ENCODE measurements at regions of chr9 and their contacts with region 1.

Region 1: DNA sequence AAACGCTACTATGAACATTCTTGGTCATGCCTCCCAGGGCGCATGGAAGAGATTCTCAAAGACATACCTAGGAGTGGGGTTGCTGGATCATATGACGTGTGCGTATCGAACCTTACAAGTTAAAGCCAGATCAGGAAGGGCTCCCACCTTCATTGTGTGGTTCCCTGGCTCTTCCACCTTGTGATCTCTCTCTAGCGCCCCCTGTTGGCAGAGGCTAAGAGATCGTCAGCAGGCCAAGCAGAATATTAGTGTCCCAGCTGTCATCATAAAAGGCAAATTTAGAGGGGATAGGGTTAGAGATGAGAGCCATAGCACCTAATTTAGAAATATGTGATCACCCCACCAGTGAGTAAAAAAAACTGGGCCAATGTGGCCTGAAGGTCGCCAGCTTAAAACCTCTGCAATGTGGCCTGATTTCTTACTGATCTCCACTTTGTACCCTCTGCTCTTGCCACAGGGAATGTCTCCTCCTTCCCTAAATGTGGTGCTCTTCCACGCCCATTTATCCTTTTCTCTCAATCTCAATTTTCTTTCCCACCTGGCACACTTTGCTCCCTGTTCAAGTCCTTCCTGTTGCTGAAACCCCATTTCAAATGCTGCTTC is 91.7 kb upstream of the SHB start:
- DNase-seq: no peak
- H3K4me3 ChIP-seq: no peak overlapping the region
- H3K27me3 ChIP-seq: peaks cover 7% of the 10 kb centered on the region
- CTCF ChIP-seq: peak; percentile 92

Region 2: DNA sequence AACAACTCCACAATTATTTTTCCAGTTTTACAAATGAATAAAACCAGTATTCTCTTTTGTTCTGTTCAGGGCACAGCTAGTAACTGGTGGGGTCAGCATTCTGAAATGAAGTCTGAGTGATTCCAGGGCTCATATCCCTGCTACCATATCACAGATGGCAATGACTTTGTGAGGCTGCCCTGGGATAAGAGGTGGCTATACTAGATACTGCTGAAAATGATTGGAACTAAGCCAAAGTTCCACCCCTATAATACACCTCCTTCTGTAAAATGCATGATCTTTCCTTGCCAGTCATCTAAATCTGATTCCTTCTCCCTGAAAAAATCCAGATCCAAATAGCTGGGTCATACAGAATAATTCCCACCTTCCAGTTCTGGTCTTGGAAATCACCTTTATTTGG is 271.2 kb before region 1 on chr9:
- CTCF ChIA-PET with region 1: no interaction called
- POLR2A ChIA-PET with region 1: no interaction called
- DNase-seq: no peak
- H3K4me3 ChIP-seq: no peak overlapping the region
- H3K27me3 ChIP-seq: no peaks in the 10 kb centered on the region
- CTCF ChIP-seq: no peak

Region 3: DNA sequence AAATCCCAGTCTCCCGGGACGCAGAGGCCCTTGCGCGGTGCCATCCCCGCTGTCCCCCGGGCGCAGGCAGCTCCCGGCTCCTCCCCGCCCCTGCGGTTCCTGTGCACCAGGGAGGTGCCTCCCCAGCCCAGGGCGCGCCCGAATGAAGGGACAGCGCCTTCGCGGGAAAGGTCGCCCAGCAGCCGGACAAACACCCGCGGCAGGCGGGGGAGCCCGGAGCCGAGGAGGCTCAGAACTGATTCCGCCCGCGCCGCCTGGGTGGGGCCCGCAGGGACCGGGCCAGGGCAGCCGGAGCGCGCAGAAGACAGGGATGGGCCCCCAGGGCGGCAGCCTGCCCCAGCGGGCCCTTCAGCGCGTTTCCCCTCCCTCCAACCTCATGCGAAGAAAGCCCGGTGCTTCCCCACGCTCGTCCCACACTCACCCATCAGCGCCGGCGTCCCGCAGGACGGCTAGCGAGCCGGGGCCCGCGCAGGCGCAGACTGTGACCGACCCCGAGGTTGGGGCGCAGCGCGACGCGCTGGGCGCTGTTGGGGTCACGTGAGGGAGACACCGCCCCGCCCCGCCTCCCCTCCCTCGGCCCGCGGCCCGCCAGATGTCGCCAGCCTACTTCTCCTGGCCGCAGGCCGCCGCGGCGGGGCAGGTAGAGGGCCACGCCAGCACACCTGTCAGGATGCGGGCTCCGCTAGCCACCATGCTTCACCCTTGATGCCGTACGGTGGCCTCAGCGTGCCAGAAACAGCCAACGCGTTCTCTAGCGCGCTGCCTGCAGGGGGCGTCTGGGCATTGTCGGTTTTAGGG is 256.9 kb before region 1 on chr9 and contains the start of gene SLC25A51:
- CTCF ChIA-PET with region 1: interaction called, 15 read pairs
- POLR2A ChIA-PET with region 1: no interaction called
- DNase-seq: peak; percentile 44
- H3K4me3 ChIP-seq: peak within 1 kb of the TSS; percentile 84
- H3K27me3 ChIP-seq: no peaks in the 10 kb centered on the region
- CTCF ChIP-seq: peak; percentile 98
- polyA plus RNA-seq, gene SLC25A51: 15.6 and 24.4 TPM in 2 replicates

Region 4: GRCh38 chr9:38141746-38142591 is 18.7 kb before region 1 on chr9:
- CTCF ChIA-PET with region 1: interaction called, 16 read pairs
- POLR2A ChIA-PET with region 1: no interaction called
- DNase-seq: peak; percentile 50
- H3K4me3 ChIP-seq: no peak overlapping the region
- H3K27me3 ChIP-seq: peaks cover 8% of the 10 kb centered on the region
- CTCF ChIP-seq: no peak

Region 5: DNA sequence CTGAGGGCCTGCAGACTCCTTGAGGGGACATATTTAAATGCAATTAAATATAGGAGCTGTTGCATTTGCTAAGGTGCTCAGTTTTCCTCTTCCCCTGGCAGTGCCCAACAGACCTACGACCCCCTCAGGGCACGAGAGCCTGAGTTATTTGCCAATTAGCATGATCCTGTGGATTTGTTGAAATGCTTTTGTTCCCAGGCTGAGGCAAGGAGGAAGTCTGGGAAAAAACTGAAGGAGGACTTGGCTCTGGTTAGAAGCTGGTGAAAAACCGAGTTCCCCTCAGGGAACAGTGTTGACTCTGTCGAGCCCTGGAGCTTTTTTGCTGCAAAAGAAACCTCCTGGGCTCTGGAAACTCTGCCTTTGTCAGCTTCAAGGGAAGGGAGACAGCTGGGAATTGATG is 11.9 kb after region 1 on chr9:
- CTCF ChIA-PET with region 1: interaction called, 24 read pairs
- POLR2A ChIA-PET with region 1: no interaction called
- DNase-seq: no peak
- H3K4me3 ChIP-seq: no peak overlapping the region
- H3K27me3 ChIP-seq: no peaks in the 10 kb centered on the region
- CTCF ChIP-seq: no peak

Region 6: GRCh38 chr9:38294220-38294960 is 133.7 kb after region 1 on chr9:
- CTCF ChIA-PET with region 1: no interaction called
- POLR2A ChIA-PET with region 1: no interaction called
- DNase-seq: no peak
- H3K4me3 ChIP-seq: no peak overlapping the region
- H3K27me3 ChIP-seq: peaks cover 6% of the 10 kb centered on the region
- CTCF ChIP-seq: no peak

Region 7: GRCh38 chr9:38414040-38414723 is 253.5 kb after region 1 on chr9:
- CTCF ChIA-PET with region 1: no interaction called
- POLR2A ChIA-PET with region 1: no interaction called
- DNase-seq: no peak
- H3K4me3 ChIP-seq: no peak overlapping the region
- H3K27me3 ChIP-seq: peaks cover 14% of the 10 kb centered on the region
- CTCF ChIP-seq: no peak

Region 8: DNA sequence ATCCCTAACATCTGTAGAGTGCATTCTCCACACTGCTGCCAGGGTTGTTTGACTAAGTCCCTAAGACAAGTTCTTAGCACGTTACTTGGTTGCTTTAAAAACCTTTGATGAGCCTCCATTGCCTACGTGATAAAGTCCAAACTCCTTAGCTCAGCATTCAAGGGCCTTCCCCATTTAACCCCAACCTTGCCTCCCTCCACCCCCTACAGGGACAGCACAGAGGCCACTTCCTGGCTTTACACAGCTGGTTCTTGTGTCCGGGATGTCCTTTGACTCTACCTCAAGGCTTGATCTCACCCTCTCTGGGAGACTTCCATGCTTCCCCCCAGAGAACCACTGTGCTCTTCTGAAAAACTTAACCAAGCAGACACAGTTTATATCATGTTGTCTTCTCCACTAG is 529.9 kb after region 1 on chr9:
- CTCF ChIA-PET with region 1: no interaction called
- POLR2A ChIA-PET with region 1: no interaction called
- DNase-seq: no peak
- H3K4me3 ChIP-seq: no peak overlapping the region
- H3K27me3 ChIP-seq: peaks cover 2% of the 10 kb centered on the region
- CTCF ChIP-seq: no peak